ENCODE measurements at regions of chr5 and their contacts with region 1.

Region 1: GRCh38 chr5:171907725-171908343 is 98.6 kb downstream of the FBXW11 start:
- DNase-seq: peak in 3 of 10 donors; percentile 17 to 33 (median 31)

Region 2: DNA sequence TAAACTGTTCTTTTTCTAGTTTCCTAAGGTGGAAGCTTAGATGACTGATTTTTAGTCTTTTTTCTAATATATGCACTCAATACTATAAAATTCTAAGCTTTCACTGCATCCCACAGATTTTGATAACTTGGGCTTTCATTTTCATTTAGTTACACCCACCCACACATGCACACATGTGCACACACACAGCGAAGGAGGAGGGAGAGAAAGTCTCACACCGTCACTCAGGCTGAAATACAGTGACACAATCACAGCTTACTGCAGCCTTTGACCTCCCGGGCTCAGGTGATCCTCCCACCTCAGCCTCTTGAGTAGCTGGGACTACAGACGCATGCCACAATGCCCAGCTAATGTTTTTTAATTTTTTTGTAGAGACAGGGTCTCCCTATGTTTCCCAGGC is 25.7 kb before region 1 on chr5:
- intact Hi-C with region 1: no loop called
- DNase-seq: no peak

Region 3: GRCh38 chr5:172035039-172035438 is 127.2 kb after region 1 on chr5:
- intact Hi-C with region 1: loop called (anchors 1 kb)
- DNase-seq: no peak

Measured in posterior cingulate gyrus (tissue), 11 donors.